Colonic mucosa (tissue), 4 donors: ENCODE measurements at regions of chr1 and their contacts with region 1.

Region 1: DNA sequence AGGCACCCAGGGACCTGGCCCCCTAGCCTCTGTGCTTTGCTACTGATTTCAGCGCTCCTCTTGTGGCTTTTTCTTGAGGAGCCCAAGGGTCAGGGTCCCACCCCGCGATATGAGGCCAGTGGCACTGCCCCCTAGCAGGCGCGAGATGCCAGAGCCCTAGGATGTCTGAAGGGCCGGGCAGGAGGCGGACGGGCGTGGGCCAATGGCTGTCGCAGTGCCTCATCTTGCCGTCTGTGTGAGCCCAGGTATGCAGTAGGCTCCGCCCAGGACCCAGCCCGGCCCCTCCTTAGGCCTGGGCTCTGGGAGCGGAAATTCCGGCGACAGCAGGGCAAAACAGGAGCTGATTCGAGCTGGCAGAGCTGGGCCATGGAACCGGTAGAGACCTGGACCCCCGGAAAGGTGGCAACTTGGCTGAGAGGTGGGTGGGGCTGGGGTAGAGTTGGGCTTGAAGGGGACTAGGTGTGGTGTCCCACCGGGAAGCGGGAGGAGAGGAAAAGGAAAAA is at the start of gene CNKSR1:
- DNase-seq: peak; percentile 90
- H3K4me3 ChIP-seq: peak within 1 kb of the TSS; percentile 34
- H3K27ac ChIP-seq: peak within 1 kb of the TSS; percentile 51
- H3K4me1 ChIP-seq: no peaks in the 10 kb centered on the region
- H3K27me3 ChIP-seq: no peaks in the 10 kb centered on the region
- CTCF ChIP-seq: peak; percentile 28
- total RNA-seq, gene CNKSR1: 35.3 to 46.8 TPM

Region 2: DNA sequence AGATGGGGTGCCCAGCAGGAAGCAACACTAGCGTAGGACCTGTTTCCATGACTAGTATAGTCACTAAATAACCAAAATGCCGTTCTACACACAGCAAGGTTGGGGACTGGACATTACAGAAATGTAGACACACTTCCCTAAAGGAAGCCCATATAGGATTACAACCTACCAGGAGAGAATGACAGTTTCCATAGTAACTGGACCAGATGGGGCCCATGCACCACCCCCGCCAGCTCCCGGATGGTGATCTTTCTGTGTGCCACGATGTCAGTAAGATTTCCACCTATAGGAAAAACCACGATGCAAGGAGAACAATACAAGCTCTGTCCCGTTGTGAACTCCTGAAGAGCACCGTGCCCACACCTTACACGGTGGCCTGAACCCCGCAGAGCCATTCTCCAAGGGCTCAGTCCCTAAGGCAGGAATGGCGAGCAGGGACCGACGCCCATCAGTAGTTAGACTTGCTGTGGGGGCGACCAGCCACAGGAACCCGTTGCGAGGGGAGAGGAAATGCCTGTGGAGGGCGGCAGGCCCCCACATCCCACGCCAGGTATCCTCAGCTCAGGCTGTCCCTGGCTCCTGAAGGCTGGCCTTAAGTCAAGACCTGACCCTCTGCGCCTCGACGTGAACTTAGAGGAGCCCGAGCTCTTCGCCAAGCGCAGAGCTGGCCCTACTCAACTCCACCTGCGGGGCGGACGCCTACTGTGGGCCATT is 43.1 kb after region 1 on chr1:
- intact Hi-C with region 1: loop called (anchors 5 kb)
- DNase-seq: no peak
- H3K4me3 ChIP-seq: no peak overlapping the region
- H3K27ac ChIP-seq: no peak overlapping the region
- H3K4me1 ChIP-seq: no peaks in the 10 kb centered on the region
- H3K27me3 ChIP-seq: no peaks in the 10 kb centered on the region
- CTCF ChIP-seq: no peak

Region 3: GRCh38 chr1:26254404-26254803 is 77.2 kb after region 1 on chr1:
- intact Hi-C with region 1: no loop called
- DNase-seq: no peak
- H3K4me3 ChIP-seq: no peak overlapping the region
- H3K27ac ChIP-seq: no peak overlapping the region
- H3K4me1 ChIP-seq: no peaks in the 10 kb centered on the region
- H3K27me3 ChIP-seq: no peaks in the 10 kb centered on the region
- CTCF ChIP-seq: no peak